ENCODE measurements at regions of chrX and their contacts with region 1.

Region 1: GRCh38 chrX:43750248-43750676 is 94.2 kb downstream of the MAOA start:
- DNase-seq: peak; percentile 12 to 57
- ATAC-seq: peak; percentile 54 to 75
- H3K4me3 ChIP-seq: no peak overlapping the region
- H3K27ac ChIP-seq: peak overlapping the region in 1 of 4 donors; percentile 43
- H3K4me1 ChIP-seq: no peaks in the 10 kb centered on the region
- H3K27me3 ChIP-seq: no peaks in the 10 kb centered on the region
- CTCF ChIP-seq: peak; percentile 42 to 57 (median 54)
- POLR2A ChIP-seq: no peak

Region 2: GRCh38 chrX:43349363-43349762 is 400.9 kb before region 1 on chrX:
- in situ Hi-C with region 1: loop called in 1 of 4 experiments (anchors 25 kb)
- intact Hi-C with region 1: no loop called
- DNase-seq: peak in 1 of 2 donors; percentile 8
- ATAC-seq: no peak
- H3K4me3 ChIP-seq: no peak overlapping the region
- H3K27ac ChIP-seq: no peak overlapping the region
- H3K4me1 ChIP-seq: no peaks in the 10 kb centered on the region
- H3K27me3 ChIP-seq: no peaks in the 10 kb centered on the region
- CTCF ChIP-seq: peak in 3 of 5 experiments; percentile 8 to 44 (median 37)
- POLR2A ChIP-seq: no peak

Region 3: DNA sequence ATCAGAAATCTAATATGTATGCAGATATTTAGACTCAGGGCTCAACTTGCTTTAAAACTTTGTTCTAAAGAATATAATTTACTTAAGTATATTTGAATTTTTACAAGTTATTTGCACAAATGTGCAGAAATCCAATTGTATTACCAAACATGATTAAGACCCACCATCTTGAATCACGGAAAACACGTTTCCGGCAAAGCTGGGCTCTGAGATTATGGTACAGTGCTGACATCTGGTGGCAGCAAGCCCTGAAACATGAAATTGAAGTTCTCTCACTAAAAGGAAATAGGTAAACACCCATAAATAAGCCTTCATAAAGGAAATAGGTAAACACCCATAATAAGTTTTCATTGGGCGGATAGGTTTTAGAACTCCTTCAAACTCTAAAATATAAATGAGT is 192.5 kb before region 1 on chrX:
- in situ Hi-C with region 1: loop called (anchors 5 to 10 kb)
- intact Hi-C with region 1: loop called (anchors 1 kb)
- DNase-seq: peak in 1 of 2 donors; percentile 15
- ATAC-seq: no peak
- H3K4me3 ChIP-seq: no peak overlapping the region
- H3K27ac ChIP-seq: no peak overlapping the region
- H3K4me1 ChIP-seq: no peaks in the 10 kb centered on the region
- H3K27me3 ChIP-seq: no peaks in the 10 kb centered on the region
- CTCF ChIP-seq: peak in 4 of 5 experiments; percentile 34 to 53 (median 36)
- POLR2A ChIP-seq: no peak

Region 4: DNA sequence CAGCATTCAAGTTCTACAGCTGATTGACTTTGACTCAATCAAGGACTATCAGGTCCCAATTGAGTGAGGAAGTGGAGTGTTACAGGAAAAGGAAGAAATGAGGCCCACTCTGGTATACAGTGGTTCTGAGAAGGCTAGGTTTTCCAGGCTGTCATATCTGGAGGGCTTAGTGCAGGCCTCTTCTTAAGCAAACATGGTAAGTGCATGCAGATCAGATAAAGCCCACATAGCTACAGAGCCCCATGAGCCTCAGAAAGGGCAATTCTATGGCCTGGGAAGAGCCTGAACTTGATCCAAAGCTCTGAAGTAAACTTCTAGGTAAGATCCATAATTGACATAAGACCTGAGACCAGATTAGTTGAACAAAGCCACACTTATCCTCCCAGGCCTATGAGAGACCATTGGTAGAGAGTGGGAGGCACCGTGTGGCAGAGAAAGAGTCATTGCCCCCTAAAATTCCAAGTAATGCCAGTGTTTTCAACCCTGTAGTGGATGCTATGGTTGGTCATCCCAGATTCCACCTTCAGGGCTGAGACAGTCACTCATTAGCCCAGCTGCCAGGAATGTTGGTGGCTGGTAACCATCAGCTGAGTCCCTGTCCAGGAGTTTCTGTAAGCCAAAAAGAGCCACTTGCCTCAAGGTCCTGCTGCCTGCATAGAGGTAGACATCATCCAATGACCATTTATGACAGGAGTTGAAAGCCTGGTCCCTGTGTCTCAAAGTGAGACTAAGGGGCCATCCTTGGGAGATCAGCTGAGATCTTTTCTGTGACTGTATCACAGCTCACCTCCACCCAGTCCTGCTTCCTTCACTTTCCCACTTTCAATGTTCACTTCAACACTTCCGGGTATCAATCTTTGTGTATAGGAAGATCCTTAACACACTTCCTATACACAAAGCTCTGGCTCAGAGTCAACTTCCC is 122.9 kb before region 1 on chrX:
- in situ Hi-C with region 1: no loop called
- intact Hi-C with region 1: no loop called
- DNase-seq: no peak
- ATAC-seq: no peak
- H3K4me3 ChIP-seq: no peak overlapping the region
- H3K27ac ChIP-seq: no peak overlapping the region
- H3K4me1 ChIP-seq: no peaks in the 10 kb centered on the region
- H3K27me3 ChIP-seq: no peaks in the 10 kb centered on the region
- CTCF ChIP-seq: no peak
- POLR2A ChIP-seq: no peak

Region 5: GRCh38 chrX:43805579-43805978 is 55.3 kb after region 1 on chrX:
- in situ Hi-C with region 1: no loop called
- intact Hi-C with region 1: no loop called
- DNase-seq: no peak
- ATAC-seq: no peak
- H3K4me3 ChIP-seq: no peak overlapping the region
- H3K27ac ChIP-seq: peak overlapping the region in 2 of 4 donors; percentile 42 to 55
- H3K4me1 ChIP-seq: peaks cover 10 to 12% of the 10 kb centered on the region in 2 donors
- H3K27me3 ChIP-seq: no peaks in the 10 kb centered on the region
- CTCF ChIP-seq: no peak
- POLR2A ChIP-seq: no peak